Activated CD4-positive, alpha-beta memory T cell treated with anti-CD3 and anti-CD28 coated beads, Interleukin-2, amount 10 ng/mL, durations not matched to agents 7 days and 5 days (primary cell): ENCODE measurements at regions of chr12 and their contacts with region 1.

Region 1: GRCh38 chr12:49967042-49967776 is 5.5 kb downstream of the AQP5 start:
- DNase-seq: peak; percentile 92
- H3K4me3 Mint-ChIP-seq: peak overlapping the region; percentile 43
- H3K27ac Mint-ChIP-seq: no peak overlapping the region
- H3K4me1 Mint-ChIP-seq: peaks cover 4% of the 10 kb centered on the region
- H3K27me3 Mint-ChIP-seq: peaks cover 46% of the 10 kb centered on the region

Region 2: GRCh38 chr12:49673446-49674317 is 293.5 kb before region 1 on chr12:
- CTCF ChIA-PET with region 1: no interaction called
- POLR2A ChIA-PET with region 1: no interaction called
- DNase-seq: no peak
- H3K4me3 Mint-ChIP-seq: no peak overlapping the region
- H3K27ac Mint-ChIP-seq: peak overlapping the region; percentile 68
- H3K4me1 Mint-ChIP-seq: peaks cover 71% of the 10 kb centered on the region
- H3K27me3 Mint-ChIP-seq: no peaks in the 10 kb centered on the region

Region 3: DNA sequence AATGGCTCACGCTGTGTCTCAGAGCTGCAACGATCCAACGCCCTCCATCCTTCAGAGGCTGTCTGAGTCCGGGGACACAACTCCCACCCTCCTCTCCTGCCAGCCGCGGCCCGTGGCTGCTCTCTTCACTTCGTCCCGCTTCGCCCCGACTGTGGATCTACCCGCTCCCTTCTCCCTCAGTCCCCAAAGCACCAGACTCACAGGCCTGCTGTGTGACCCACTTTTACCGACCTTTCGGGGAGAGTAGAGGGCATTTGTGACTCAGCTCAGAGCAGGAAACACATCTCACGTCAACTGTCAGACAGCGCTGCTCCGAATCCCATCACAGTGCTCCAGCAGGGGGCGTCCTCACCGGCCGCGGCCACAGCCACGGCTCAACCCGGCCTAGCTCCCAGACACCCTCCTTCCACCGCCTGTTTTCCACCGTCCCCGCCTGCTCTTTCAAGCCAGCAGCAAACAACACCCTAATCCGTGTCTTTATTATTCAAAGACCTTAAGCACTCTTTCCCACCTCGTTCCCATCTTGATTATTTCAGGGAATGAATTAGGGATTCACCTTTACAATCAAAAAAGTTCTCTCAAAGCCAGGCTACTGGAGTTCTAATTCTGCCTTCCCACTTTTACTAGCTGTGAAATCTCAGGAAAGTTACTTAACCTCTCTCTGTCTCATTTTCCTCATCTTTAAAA is 21.7 kb before region 1 on chr12:
- CTCF ChIA-PET with region 1: interaction called, 86 read pairs
- POLR2A ChIA-PET with region 1: interaction called, 11 read pairs
- DNase-seq: peak; percentile 89
- H3K4me3 Mint-ChIP-seq: peak overlapping the region; percentile 82
- H3K27ac Mint-ChIP-seq: peak overlapping the region; percentile 90
- H3K4me1 Mint-ChIP-seq: peaks cover 55% of the 10 kb centered on the region
- H3K27me3 Mint-ChIP-seq: peaks cover 4% of the 10 kb centered on the region

Region 4: GRCh38 chr12:49983892-49984291 is 16.7 kb after region 1 on chr12:
- CTCF ChIA-PET with region 1: interaction called, 101 read pairs
- POLR2A ChIA-PET with region 1: interaction called, 7 read pairs
- DNase-seq: no peak
- H3K4me3 Mint-ChIP-seq: no peak overlapping the region
- H3K27ac Mint-ChIP-seq: no peak overlapping the region
- H3K4me1 Mint-ChIP-seq: peaks cover 3% of the 10 kb centered on the region
- H3K27me3 Mint-ChIP-seq: no peaks in the 10 kb centered on the region

Region 5: DNA sequence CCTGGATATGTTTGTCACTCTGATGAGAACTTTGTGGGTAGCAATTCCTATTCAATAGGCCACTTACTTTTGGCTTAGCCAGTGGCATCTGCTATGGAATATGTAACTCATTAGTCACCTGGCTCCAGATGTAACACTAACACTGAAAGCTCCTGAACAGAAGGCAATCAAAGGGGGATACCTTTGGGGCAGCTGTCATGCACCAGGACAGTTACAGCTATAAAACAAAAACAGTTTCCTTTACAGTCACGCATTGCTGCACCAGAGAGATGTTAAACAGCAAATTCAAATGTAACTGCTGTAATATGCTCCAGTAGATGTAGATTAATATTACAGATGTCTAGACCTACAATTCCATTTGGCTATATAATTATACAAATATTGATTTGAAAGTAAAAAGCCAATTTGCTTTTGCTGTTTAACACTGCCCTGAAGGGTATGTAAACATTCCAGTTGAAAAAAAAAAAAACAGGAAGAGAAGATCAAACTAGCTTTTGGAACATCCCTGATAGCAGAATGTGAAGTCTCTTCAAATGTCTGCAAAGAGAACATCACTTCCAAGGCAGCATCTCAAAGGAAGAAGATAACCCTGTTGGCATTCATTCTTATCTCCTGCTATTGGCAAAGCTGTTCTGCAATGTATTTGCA is 39.7 kb after region 1 on chr12:
- CTCF ChIA-PET with region 1: interaction called, 14 read pairs
- POLR2A ChIA-PET with region 1: no interaction called
- DNase-seq: no peak
- H3K4me3 Mint-ChIP-seq: no peak overlapping the region
- H3K27ac Mint-ChIP-seq: no peak overlapping the region
- H3K4me1 Mint-ChIP-seq: peaks cover 15% of the 10 kb centered on the region
- H3K27me3 Mint-ChIP-seq: no peaks in the 10 kb centered on the region

Region 6: DNA sequence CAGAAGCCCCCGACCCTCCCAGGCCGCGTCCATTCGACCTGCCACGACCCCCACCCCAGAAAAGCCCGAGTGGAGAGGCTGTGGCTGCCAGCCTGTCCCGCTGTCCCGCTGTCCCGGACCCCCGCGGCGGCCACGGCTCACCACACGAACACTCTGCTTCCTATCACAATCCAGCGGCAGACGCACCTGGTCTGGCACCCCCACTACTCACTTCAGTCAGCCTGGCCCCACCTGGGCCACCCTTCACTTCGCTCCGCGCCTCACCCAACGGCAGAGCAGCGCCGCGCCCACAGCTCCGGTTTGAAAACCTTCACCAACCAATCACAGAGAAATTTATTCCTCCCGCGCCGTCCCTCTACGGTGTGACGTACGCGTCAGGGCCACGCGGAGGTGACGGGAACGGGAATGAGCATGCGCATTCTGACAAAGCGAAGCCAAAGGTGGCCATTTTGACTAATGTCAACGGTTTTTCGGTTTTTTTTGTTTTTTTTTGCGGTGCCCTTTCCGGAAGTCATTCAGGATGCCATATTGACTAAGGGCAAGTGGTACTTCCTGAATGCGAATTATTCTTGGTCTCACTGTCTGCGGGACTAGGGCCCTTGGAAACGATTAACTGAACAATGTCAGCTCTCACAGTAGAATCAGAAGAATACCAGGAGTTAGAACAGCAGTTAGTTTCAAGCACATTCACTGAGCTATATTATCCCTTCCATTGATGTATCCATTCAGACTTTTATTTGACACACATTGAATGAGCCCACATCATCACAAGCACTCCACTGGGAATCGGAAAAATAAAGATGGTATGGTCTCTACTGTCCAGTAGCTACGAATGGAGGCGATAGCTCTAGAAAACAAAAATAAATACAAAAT is 58.2 kb after region 1 on chr12 and contains the start of gene RACGAP1:
- CTCF ChIA-PET with region 1: interaction called, 21 read pairs
- POLR2A ChIA-PET with region 1: interaction called, 3 read pairs
- DNase-seq: peak; percentile 98
- H3K4me3 Mint-ChIP-seq: peak within 1 kb of the TSS; percentile 94
- H3K27ac Mint-ChIP-seq: peak within 1 kb of the TSS; percentile 96
- H3K4me1 Mint-ChIP-seq: peaks cover 44% of the 10 kb centered on the region
- H3K27me3 Mint-ChIP-seq: peaks cover 2% of the 10 kb centered on the region
- total RNA-seq, gene RACGAP1: 172 to 179 TPM

Region 7: DNA sequence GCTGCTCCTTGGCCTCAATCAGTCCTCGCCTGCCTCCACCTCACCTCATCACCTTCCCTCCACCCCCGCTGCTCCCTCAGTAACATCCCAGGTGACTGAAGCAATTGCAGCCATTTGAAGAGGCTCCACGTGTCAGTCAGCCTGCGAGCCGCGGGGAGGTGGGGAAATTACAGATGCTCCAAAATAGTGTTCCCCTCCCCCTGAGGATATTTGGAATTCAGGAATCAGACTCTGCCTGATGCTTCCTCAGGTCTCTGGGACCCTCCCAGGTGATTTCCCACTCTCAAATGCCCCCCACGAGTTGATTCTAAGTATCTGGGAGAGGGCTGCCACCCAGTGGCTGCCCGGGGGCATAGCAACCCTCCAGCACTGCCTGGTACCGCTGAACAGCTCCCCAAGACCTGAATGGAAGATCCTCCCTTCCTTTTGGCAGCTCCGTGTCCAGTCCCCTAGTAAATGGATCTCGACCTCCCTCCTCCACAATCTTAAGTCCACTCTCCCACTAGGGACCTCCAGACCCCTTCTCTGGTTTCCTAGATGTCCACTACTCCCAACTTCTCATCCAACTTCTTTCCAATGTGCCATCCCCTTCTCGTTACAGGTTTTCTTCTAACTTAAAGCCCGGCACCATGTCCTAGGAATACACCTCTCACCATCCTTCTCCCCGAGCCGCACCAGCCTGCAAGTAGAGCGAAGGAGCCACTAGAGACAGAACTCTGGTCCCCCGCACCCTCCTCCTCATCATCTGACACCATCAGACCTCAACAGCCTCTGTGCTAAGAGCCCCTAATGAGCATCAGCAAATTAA is 88.8 kb after region 1 on chr12:
- CTCF ChIA-PET with region 1: interaction called, 33 read pairs
- POLR2A ChIA-PET with region 1: no interaction called
- DNase-seq: peak; percentile 56
- H3K4me3 Mint-ChIP-seq: peak overlapping the region; percentile 25
- H3K27ac Mint-ChIP-seq: no peak overlapping the region
- H3K4me1 Mint-ChIP-seq: peaks cover 28% of the 10 kb centered on the region
- H3K27me3 Mint-ChIP-seq: peaks cover 58% of the 10 kb centered on the region

Region 8: DNA sequence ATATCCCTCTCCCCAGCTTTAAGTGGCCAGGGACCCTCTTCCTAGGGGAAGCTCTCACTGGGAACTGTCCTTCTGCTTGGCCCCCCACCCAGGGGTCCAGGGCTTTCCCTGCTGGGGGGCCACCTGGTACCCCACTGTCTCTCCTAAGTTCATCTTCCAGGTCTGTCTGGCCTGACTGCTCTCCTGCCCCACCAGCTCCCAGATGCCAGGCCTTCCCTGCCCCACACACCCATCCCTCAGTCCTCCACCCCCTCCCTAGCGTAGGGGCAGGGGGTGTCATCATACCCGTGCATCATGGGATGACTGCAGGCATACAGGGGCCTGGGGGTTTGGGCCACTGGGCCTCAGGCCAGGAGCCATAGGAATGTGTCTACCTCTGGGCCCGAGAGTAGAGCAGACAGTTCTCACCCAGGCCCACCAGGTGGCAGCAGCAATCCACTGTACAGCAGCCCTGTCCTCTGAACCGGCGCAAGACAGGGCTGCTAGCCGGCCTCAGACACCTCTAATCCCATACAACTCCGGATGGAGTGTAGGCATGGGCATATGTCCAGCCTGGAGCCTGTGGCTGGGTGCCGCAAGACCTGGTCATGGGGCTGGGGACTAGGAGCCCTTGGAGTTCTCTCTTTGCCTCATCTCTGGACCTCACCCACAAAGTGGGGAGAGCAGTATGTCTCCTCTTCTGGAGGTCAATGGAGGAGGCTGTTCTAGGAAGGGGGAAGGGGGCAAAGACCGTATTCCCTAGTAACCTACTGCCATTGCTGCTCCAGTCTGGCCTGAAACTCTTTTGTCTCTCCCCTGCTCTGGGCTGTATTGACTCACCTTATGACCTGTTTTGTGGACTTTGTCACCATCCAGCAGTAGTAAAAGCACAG is 108.0 kb after region 1 on chr12:
- CTCF ChIA-PET with region 1: interaction called, 82 read pairs
- POLR2A ChIA-PET with region 1: interaction called, 3 read pairs
- DNase-seq: peak; percentile 83
- H3K4me3 Mint-ChIP-seq: no peak overlapping the region
- H3K27ac Mint-ChIP-seq: no peak overlapping the region
- H3K4me1 Mint-ChIP-seq: peaks cover 6% of the 10 kb centered on the region
- H3K27me3 Mint-ChIP-seq: peaks cover 4% of the 10 kb centered on the region